ENCODE measurements at regions of chr15 and their contacts with region 1.

Region 1: GRCh38 chr15:38636597-38636996 is 72.0 kb upstream of the RASGRP1 start:
- DNase-seq: no peak
- ATAC-seq: no peak
- H3K4me3 ChIP-seq: no peak overlapping the region
- H3K4me3 Mint-ChIP-seq: no peak overlapping the region
- H3K27ac ChIP-seq: no peak overlapping the region
- H3K27ac Mint-ChIP-seq: no peak overlapping the region
- H3K4me1 ChIP-seq: peaks cover 20% of the 10 kb centered on the region
- H3K4me1 Mint-ChIP-seq: peaks cover 30% of the 10 kb centered on the region
- H3K27me3 ChIP-seq: no peaks in the 10 kb centered on the region
- H3K27me3 Mint-ChIP-seq: no peaks in the 10 kb centered on the region
- CTCF ChIP-seq: no peak

Region 2: DNA sequence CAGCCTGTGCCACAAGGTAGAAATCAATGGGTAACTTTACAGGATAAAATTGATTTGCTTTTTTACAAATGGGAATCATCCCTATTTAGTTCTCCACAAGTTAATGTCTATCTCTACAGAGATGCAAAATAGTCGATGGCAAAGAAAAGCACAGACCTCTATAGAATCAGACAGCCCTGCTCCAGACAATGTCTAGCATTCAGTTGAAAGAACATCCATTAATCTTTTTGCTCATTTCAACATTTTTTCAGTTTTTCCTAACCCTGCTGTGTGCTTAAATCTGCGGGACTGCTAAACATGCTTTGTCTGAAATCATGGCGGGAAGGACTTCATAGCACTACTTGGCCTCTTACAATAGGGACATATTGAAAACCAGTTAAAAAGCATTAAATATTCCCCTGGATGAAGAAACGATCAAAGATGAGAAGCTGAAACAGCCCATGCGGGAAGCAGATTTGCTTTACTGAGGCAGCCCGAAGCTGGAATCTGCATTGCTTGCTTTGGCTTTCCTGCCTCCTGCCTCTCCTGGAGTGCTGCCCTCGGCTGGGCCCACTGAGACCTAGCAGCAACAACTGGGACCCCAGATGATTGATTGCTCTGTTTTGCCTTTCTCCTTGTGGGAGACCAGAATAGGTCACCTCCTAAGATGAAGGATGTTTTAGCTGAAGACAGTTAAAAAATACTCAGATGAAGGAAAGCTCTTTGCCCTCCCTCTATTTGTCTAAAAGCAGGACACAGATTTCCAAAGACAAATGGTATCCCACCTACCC is 33.5 kb before region 1 on chr15:
- CTCF ChIA-PET with region 1: interaction called, 3 read pairs
- POLR2A ChIA-PET with region 1: interaction called, 4 read pairs
- intact Hi-C with region 1: loop called in 1 of 2 experiments (anchors 5 kb)
- DNase-seq: no peak
- ATAC-seq: no peak
- H3K4me3 ChIP-seq: no peak overlapping the region
- H3K4me3 Mint-ChIP-seq: no peak overlapping the region
- H3K27ac ChIP-seq: no peak overlapping the region
- H3K27ac Mint-ChIP-seq: no peak overlapping the region
- H3K4me1 ChIP-seq: no peaks in the 10 kb centered on the region
- H3K4me1 Mint-ChIP-seq: no peaks in the 10 kb centered on the region
- H3K27me3 ChIP-seq: no peaks in the 10 kb centered on the region
- H3K27me3 Mint-ChIP-seq: no peaks in the 10 kb centered on the region
- CTCF ChIP-seq: no peak

Region 3: GRCh38 chr15:38750791-38751190 is 114.2 kb after region 1 on chr15:
- CTCF ChIA-PET with region 1: no interaction called
- POLR2A ChIA-PET with region 1: no interaction called
- intact Hi-C with region 1: no loop called
- DNase-seq: no peak
- ATAC-seq: no peak
- H3K4me3 ChIP-seq: no peak overlapping the region
- H3K4me3 Mint-ChIP-seq: no peak overlapping the region
- H3K27ac ChIP-seq: no peak overlapping the region
- H3K27ac Mint-ChIP-seq: no peak overlapping the region
- H3K4me1 ChIP-seq: no peaks in the 10 kb centered on the region
- H3K4me1 Mint-ChIP-seq: no peaks in the 10 kb centered on the region
- H3K27me3 ChIP-seq: peaks cover 0 to under 1% of the 10 kb centered on the region in 2 experiments
- H3K27me3 Mint-ChIP-seq: peaks cover 34% of the 10 kb centered on the region
- CTCF ChIP-seq: no peak

Region 4: DNA sequence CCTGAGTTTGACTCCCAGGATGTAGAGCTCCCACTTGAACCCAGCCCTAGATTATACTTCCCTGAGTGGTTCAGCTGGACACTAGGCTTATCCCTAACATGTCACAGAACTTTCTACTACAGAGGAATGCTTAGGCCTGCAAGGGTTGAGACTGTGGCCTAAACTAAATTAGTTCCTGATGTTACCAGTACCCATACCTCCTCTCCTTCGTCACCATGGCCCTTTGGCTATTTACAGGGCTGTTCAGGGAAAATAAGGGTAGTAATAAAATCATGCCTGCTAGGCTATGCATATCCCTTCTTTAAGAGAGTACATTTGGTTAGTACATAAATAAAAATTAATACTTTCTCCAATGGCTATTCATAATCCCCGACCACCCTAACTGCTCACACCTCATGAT is 284.4 kb after region 1 on chr15:
- CTCF ChIA-PET with region 1: no interaction called
- POLR2A ChIA-PET with region 1: no interaction called
- intact Hi-C with region 1: no loop called
- DNase-seq: no peak
- ATAC-seq: no peak
- H3K4me3 ChIP-seq: no peak overlapping the region
- H3K4me3 Mint-ChIP-seq: no peak overlapping the region
- H3K27ac ChIP-seq: no peak overlapping the region
- H3K27ac Mint-ChIP-seq: no peak overlapping the region
- H3K4me1 ChIP-seq: no peaks in the 10 kb centered on the region
- H3K4me1 Mint-ChIP-seq: no peaks in the 10 kb centered on the region
- H3K27me3 ChIP-seq: no peaks in the 10 kb centered on the region
- H3K27me3 Mint-ChIP-seq: peaks cover 13% of the 10 kb centered on the region
- CTCF ChIP-seq: no peak